Endothelial cell of umbilical vein (primary cell): ENCODE measurements at regions of chr6 and their contacts with region 1.

Region 1: DNA sequence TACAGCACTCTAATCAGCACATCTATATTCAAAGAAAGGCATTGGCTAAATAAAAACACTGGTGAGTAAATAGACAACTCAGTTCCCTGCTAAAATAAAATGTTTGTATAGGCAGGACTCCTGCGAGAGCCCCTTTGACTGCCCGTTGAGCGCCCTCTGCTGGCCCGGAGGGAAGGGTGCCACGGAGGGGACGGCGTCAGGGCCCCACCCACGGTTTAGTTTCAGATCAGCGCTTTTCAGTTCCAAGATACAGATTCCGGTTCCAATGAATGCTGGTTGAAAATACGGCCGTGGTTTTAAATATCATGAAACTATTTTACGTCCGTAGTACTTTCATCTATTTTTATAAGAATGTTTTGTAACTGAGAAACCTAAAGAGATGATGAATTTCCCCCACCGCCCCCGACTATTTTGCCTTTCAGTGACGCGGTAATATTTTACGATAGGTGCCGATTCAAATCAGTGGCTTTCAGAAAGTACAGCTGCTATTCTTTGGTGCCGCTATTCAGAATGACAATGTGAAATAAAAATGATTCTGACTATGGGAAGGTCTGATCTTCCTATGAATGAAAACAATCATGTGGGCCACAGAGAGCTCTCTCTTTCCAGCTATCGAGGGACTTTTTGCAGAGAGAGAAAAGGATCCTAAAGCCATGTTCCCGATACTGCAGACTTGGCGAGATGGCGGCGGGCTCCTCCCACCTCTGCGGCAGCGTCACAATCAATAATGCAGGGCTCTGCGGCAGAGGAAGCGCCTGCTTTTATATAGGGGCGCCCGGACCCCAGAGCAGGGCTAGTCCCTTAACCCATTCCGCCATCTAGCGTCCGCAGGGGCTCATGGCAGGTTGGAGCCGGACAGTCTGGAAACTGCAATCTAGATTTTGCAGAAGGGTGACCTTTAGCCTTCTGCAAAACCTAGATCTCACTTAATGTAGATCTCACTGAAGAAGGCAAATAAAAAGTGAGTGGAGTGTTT is 10.6 kb upstream of the CCN6 start:
- DNase-seq: peak; percentile 95
- H3K4me3 ChIP-seq: peak overlapping the region; percentile 33 to 95 (median 89)
- H3K27ac ChIP-seq: peak overlapping the region; percentile 92
- H3K4me1 ChIP-seq: peaks cover 38% of the 10 kb centered on the region
- H3K27me3 ChIP-seq: no peaks in the 10 kb centered on the region
- CTCF ChIP-seq: peak; percentile 96 to 98
- POLR2A ChIP-seq: peak; percentile 54

Region 2: DNA sequence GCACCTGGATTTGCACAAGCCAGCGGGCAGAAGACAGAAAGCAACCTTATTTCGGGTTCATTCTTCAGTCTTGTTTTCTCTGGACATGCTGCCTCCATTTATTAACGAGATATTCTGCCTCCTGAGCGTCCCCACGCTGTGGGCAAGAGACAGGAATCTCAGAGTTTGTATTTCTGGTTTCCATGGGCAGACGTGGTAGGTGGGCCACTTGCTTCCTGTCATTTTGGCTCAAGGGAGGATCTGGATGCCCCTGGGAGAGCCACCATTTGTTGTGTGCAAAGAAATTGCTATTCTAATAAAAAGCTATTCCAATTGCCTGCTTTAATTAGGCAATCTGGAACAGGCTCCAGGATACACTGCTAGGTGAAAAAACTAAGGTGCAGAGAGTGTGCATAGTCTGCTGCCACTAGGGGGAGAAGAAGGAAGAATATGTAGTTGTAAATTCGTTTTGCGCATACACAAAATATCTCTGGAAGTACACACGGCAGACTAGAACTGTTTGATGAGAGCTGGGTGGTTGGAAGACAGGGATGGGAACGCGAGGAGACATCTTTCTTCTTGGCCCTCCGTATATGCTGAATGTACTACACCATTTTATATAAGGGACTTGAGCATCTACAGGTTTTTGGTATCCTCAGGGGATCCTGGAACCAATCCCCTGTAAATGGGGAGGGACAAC is 986.1 kb before region 1 on chr6:
- CTCF ChIA-PET with region 1: interaction called, 3 read pairs
- POLR2A ChIA-PET with region 1: no interaction called
- dilution Hi-C with region 1: no loop called
- intact Hi-C with region 1: loop called (anchors 1 kb)
- DNase-seq: peak; percentile 49
- H3K4me3 ChIP-seq: no peak overlapping the region
- H3K27ac ChIP-seq: no peak overlapping the region
- H3K4me1 ChIP-seq: no peaks in the 10 kb centered on the region
- H3K27me3 ChIP-seq: peaks cover 7 to 9% of the 10 kb centered on the region in 2 experiments
- CTCF ChIP-seq: peak; percentile 56 to 64
- POLR2A ChIP-seq: no peak

Region 3: GRCh38 chr6:111483736-111484632 is 559.3 kb before region 1 on chr6:
- CTCF ChIA-PET with region 1: interaction called, 3 read pairs
- POLR2A ChIA-PET with region 1: no interaction called
- dilution Hi-C with region 1: no loop called
- intact Hi-C with region 1: loop called (anchors 1 kb)
- DNase-seq: peak; percentile 96
- H3K4me3 ChIP-seq: peak overlapping the region; percentile 62 to 85 (median 67)
- H3K27ac ChIP-seq: peak overlapping the region; percentile 97
- H3K4me1 ChIP-seq: peaks cover 24% of the 10 kb centered on the region
- H3K27me3 ChIP-seq: no peaks in the 10 kb centered on the region
- CTCF ChIP-seq: no peak
- POLR2A ChIP-seq: peak; percentile 93

Region 4: DNA sequence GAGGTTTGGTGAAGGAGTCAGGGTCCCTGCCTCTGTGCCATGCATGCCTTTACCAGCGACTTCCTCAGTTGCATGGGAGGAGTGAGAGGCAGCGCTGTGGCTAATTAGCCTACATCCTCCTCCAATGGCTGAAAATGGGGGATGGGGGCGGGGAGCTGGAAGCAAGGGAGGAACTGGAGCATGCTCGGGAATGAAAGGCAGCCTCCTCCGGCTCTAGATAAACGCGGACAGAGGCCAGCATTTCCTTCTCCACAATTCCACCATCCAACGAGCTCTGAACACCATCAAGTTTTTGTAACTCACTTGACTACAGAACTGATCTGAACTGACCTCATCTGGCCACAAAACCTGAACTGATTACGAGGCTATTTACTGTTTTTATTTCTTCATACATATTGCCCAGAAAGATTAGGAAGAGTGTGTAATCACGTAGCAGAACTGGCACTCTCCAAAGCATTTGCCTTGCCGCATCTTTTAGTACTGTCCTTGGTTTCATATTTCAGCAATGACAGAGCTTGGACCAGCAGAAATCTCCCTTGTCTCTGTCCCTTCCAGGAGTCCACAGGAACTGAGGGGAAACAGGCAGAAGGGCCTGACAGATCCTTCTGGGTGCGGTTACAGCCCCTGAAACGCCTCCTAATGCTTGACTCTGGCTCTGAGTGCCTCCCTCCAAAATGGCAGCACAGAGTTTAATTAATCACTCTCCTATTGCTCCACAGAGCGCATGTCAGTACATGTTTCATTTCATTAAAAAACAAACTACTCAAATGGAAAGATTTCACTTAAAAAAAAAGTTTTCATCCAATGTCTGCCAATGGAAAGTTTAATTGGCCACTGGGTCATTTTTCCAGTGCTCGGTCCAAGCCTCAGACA is 379.4 kb before region 1 on chr6:
- CTCF ChIA-PET with region 1: interaction called, 3 read pairs
- POLR2A ChIA-PET with region 1: no interaction called
- dilution Hi-C with region 1: no loop called
- intact Hi-C with region 1: loop called (anchors 5 kb)
- DNase-seq: peak; percentile 38
- H3K4me3 ChIP-seq: no peak overlapping the region
- H3K27ac ChIP-seq: no peak overlapping the region
- H3K4me1 ChIP-seq: peaks cover 27% of the 10 kb centered on the region
- H3K27me3 ChIP-seq: no peaks in the 10 kb centered on the region
- CTCF ChIP-seq: no peak
- POLR2A ChIP-seq: no peak

Region 5: GRCh38 chr6:111873178-111874024 is 169.9 kb before region 1 on chr6 and contains the start of gene FYN:
- CTCF ChIA-PET with region 1: interaction called, 12 read pairs
- POLR2A ChIA-PET with region 1: no interaction called
- dilution Hi-C with region 1: no loop called
- intact Hi-C with region 1: loop called (anchors 1 kb)
- DNase-seq: peak; percentile 99
- H3K4me3 ChIP-seq: peak within 1 kb of the TSS; percentile 76 to 96 (median 85)
- H3K27ac ChIP-seq: peak within 1 kb of the TSS; percentile 59
- H3K4me1 ChIP-seq: peaks cover 30% of the 10 kb centered on the region
- H3K27me3 ChIP-seq: no peaks in the 10 kb centered on the region
- CTCF ChIP-seq: peak in 1 of 2 donors; percentile 53
- POLR2A ChIP-seq: peak; percentile 62
- total RNA-seq, gene FYN: 143 and 151 TPM in 2 replicates

Region 6: DNA sequence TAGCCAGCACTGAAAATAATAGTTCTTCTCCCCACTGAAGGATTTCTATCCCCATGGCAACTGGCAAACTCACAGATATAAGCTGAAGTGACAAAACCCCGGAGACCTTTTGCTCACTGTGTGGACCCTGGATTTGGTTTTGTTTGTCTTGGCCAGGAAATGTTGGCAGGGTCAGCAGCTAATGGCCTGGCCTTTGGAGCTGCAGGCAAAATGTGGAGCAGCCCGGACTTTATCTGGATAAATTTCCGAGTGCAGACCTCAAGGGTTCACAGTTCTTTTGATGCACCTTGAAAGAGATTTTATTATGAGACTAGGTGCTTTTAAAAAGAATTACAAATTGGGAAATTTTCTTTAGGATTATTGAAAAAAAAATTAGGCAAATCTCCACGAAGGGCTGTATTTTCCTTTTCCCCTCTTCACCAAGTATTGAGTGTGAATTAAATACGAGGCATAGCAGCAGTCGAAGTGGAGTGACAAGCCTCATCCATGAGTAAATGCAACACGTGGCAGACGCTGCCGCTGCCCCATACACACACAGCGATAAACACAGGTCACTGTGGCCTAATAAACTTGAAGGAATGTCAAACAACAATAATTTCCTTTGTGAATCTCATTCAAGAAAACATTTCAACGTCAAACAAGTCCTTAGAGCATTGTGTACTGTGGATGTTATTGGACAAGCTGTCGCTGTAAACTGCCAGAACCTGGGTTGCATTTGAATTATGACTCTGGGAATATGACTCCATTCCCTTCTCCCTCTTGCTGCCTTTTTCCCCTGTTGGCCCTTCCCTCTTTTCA is 24.5 kb before region 1 on chr6:
- CTCF ChIA-PET with region 1: interaction called, 13 read pairs
- POLR2A ChIA-PET with region 1: no interaction called
- dilution Hi-C with region 1: no loop called
- intact Hi-C with region 1: no loop called
- DNase-seq: peak; percentile 63
- H3K4me3 ChIP-seq: no peak overlapping the region
- H3K27ac ChIP-seq: no peak overlapping the region
- H3K4me1 ChIP-seq: peaks cover 16% of the 10 kb centered on the region
- H3K27me3 ChIP-seq: no peaks in the 10 kb centered on the region
- CTCF ChIP-seq: no peak
- POLR2A ChIP-seq: no peak

Region 7: DNA sequence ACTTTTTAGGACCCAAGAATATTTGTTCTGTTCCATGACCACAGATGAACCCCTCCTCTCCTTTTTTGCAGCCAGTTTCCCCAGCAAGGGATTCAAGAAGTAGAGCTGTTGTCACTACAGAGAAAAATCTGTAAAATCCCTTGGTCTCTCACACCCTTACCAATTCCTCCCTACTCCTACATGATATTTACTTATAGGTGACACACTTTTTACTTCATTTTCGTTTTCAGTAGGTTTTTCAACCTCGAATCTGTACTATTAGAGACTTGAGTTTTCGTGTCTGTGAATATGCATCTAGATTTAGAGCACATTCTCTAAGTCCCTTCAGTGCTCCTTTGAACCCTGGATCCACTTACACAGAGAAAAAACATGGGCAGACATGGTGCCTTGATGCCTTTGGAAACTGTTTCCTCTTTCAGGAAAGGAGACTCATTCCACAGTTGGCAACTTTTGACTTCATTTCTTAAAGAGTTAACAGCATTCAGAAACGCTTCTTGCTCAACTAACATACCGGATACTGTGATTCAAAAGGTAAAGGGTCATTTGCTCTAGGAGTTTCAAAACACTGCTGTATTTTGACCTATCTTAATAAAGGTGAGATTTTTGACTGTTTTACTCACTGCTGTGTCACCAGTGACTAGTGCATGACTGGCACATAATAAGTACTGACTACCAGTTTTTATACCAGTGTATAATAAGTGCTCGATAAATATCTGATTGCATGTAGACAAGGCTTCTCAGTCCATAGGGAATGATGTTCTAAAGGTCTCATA is 160.4 kb after region 1 on chr6:
- CTCF ChIA-PET with region 1: no interaction called
- POLR2A ChIA-PET with region 1: no interaction called
- dilution Hi-C with region 1: no loop called
- intact Hi-C with region 1: no loop called
- DNase-seq: peak; percentile 94
- H3K4me3 ChIP-seq: no peak overlapping the region
- H3K27ac ChIP-seq: peak overlapping the region; percentile 87
- H3K4me1 ChIP-seq: peaks cover 77% of the 10 kb centered on the region
- H3K27me3 ChIP-seq: no peaks in the 10 kb centered on the region
- CTCF ChIP-seq: no peak
- POLR2A ChIP-seq: no peak